ENCODE measurements at regions of chr10 and their contacts with region 1.

Region 1: DNA sequence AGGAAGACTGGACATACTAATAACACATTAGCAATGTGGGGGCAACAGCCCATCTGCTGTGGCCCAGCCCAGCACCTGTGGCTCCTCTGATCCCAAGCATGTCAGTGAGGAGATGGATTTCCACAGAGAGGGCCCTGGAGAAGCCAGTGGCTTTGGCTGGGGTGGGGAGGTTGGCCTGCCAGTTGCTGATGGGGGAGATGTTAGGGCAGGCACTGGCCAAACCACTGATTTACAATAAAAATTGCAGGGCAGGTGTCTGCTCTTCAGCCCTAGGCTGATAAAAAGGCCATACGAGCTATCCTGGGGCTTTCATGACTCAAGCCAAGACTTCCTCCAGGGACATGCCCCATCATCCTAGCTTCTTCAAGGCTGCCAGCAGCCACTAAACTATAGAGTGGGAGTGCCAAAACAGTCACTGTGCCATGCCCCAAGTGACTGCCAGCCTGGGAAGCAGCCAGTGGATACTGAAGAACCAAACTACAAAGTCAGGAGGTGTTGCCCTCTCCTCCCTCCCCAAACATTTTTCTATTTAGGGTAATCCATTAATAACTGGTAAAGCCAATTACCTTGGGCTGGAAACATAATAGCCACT is 37.8 kb downstream of the DPCD start:
- DNase-seq: no peak
- H3K4me3 ChIP-seq: no peak overlapping the region
- H3K27ac ChIP-seq: no peak overlapping the region
- H3K4me1 ChIP-seq: peaks cover 12% of the 10 kb centered on the region
- H3K27me3 ChIP-seq: no peaks in the 10 kb centered on the region
- CTCF ChIP-seq: no peak

Region 2: GRCh38 chr10:101529725-101530553 is 96.0 kb before region 1 on chr10:
- CTCF ChIA-PET with region 1: no interaction called
- dilution Hi-C with region 1: no loop called
- in situ Hi-C with region 1: no loop called
- intact Hi-C with region 1: no loop called
- DNase-seq: no peak
- H3K4me3 ChIP-seq: no peak overlapping the region
- H3K27ac ChIP-seq: no peak overlapping the region
- H3K4me1 ChIP-seq: no peaks in the 10 kb centered on the region
- H3K27me3 ChIP-seq: no peaks in the 10 kb centered on the region
- CTCF ChIP-seq: no peak

Region 3: GRCh38 chr10:101545898-101546297 is 80.0 kb before region 1 on chr10:
- CTCF ChIA-PET with region 1: no interaction called
- dilution Hi-C with region 1: no loop called
- in situ Hi-C with region 1: no loop called
- intact Hi-C with region 1: no loop called
- DNase-seq: no peak
- H3K4me3 ChIP-seq: no peak overlapping the region
- H3K27ac ChIP-seq: no peak overlapping the region
- H3K4me1 ChIP-seq: no peaks in the 10 kb centered on the region
- H3K27me3 ChIP-seq: no peaks in the 10 kb centered on the region
- CTCF ChIP-seq: no peak

Region 4: DNA sequence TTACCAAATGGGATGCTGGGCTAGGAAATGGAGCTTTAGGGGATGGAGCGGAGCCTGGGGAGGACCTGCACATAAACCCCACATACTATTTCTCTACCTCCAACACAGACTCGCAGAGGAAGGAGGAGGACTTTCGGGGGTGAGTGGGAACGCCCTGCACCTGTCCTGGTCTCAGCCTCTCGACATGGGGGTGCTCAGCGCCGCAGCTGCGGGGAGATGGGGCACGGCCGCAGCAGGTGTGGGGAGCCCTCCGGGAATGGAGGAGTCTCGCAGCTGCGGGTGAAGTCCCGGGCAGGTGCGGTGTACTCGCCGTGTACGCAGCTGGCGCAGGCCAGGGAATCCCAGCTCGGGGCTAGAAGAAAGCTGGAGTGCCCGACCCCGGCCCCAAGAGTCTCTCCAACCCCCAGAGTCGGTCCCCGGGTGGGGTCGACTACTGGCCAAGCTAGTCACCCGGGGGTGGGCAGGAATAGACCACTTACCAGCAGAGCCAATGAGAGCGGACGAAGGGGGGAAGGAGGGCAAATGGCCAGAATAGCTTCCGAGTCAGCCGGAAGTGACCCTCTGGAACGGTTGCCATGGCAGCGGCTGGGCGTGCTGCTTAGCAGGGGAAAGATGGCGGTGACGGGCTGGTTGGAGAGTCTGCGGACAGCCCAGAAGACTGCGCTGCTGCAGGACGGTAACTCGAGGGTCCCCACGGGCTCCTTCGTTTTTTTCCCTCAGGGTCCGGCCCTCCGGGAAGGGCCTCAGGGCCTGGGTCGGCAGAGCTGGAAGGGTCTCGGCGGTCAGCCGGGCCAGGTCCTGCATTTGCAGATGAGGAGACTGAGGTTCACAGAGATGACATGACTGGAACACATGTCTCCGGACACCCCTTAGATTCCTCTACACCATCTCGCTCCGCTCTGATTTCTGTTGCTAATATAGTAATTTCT is 37.9 kb before region 1 on chr10 and contains the starts of genes DPCD and POLL:
- CTCF ChIA-PET with region 1: no interaction called
- dilution Hi-C with region 1: no loop called
- in situ Hi-C with region 1: no loop called
- intact Hi-C with region 1: no loop called
- DNase-seq: peak; percentile 88
- H3K4me3 ChIP-seq: peak within 1 kb of the TSS; percentile 72 to 80 (median 77)
- H3K27ac ChIP-seq: peak within 1 kb of the TSS; percentile 43
- H3K4me1 ChIP-seq: no peaks in the 10 kb centered on the region
- H3K27me3 ChIP-seq: no peaks in the 10 kb centered on the region
- CTCF ChIP-seq: no peak
- total RNA-seq, gene DPCD: 25.8 to 32.2 TPM
- total RNA-seq, gene POLL: 14.7 to 30.3 TPM

Region 5: DNA sequence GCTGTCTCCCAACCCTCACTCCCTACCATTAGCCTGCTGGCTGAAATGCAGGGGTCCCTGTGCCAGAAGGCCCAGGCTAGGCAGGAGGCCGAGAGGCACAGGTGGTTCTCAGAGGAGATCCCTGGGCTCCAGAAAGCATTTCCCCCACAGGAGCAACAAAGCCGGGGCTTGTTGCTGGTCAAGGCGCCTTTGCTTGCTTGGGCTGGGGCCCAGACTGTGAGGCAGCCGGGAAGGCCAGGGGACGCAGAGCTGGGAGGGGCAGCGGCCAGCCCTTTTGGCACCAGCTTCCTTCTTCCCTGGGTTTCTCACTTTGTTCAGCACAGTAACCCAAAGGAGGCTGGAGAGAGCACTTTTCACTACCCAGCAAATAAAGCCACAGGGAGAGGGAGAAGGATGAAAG is 20.4 kb after region 1 on chr10:
- CTCF ChIA-PET with region 1: no interaction called
- dilution Hi-C with region 1: no loop called
- in situ Hi-C with region 1: no loop called
- intact Hi-C with region 1: loop called (anchors 2 kb)
- DNase-seq: no peak
- H3K4me3 ChIP-seq: no peak overlapping the region
- H3K27ac ChIP-seq: no peak overlapping the region
- H3K4me1 ChIP-seq: no peaks in the 10 kb centered on the region
- H3K27me3 ChIP-seq: no peaks in the 10 kb centered on the region
- CTCF ChIP-seq: no peak

Region 6: DNA sequence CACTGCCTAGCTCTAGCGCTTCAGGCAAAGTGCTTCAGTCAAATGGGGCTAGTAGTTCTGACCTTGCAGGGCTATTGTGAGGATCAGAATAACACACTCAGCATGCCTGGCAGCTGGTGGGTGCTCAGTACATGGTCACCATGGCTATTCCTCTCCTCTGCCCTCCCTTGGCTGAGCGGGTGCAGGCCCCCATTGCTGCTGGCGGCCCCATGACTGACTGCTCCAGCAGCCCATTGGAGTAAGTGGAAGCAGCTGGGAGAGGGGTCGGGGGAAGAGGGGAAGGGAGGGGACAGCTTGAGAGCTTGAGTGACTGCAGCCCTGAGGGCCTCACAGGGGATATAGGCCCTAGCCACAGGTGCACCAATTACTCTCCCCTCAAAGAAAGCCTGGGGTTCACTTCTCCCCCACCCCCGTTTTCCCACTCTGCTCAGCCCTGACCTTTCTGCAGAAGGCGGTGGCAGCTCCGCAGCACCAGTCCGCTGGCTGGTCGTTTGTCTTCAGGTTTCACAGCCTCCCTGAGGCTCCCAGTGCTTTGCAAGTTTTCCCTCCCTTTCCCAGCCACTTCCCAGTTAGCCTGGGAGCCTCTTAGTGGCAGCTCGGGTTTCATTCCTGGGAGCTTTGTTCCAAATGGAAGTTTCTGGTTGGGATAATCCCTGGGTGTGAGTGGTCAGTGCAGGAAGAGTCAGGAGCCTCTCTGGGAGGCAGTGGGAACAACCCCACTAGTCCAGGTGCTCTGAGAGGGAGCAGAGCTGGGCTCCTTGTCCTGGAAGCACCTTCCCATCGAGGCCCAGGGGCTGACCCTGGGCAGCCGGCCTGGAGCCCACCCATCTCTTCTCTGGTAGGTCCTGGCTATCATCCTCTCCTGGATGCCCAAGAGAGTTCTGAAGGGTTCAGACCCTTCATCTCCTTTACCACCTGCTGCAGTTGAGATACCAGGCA is 133.7 kb after region 1 on chr10:
- CTCF ChIA-PET with region 1: no interaction called
- dilution Hi-C with region 1: loop called (anchors 5 kb)
- in situ Hi-C with region 1: no loop called
- intact Hi-C with region 1: no loop called
- DNase-seq: no peak
- H3K4me3 ChIP-seq: no peak overlapping the region
- H3K27ac ChIP-seq: no peak overlapping the region
- H3K4me1 ChIP-seq: no peaks in the 10 kb centered on the region
- H3K27me3 ChIP-seq: peaks cover 2% of the 10 kb centered on the region
- CTCF ChIP-seq: no peak